Tibial artery (tissue), 4 donors: ENCODE measurements at regions of chr10 and their contacts with region 1.

Region 1: DNA sequence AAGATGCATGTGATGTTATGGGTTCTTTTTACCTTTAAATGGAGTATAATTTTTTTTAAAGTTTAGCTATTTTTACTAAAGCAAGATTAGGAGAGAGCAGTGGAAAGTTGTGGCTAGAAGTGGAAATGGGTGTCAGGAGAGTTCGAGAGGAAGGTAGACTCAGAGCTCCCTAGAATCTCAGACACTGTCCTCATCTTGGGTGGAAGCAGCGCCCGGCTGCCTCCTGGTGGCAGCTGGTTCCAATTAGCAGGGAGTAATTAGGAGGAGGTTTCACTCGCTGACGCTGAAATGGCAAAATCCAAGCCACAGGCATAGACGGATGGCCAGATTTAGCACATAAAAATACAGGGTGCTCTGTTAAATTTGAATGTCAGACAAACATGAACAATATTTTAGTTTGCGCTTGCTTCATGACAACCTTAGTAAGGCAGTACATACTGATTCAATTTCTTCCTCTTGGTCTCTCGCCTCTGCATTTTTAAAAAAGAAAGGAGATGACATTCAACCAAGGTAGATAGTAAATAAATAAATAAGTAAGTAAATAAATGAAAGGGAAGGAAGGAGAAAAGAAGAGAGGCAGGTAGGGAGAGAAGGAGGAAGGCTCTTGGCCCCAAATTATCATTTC is 58.5 kb downstream of the LGI1 start:
- DNase-seq: peak; percentile 69 to 76
- H3K4me3 ChIP-seq: peak overlapping the region; percentile 12 to 14
- H3K27ac ChIP-seq: peak overlapping the region in 1 of 2 donors; percentile 55
- H3K4me1 ChIP-seq: peaks cover 0 to 19% (median 7%) of the 10 kb centered on the region in 4 donors
- H3K27me3 ChIP-seq: no peaks in the 10 kb centered on the region
- CTCF ChIP-seq: peak; percentile 73 to 76

Region 2: DNA sequence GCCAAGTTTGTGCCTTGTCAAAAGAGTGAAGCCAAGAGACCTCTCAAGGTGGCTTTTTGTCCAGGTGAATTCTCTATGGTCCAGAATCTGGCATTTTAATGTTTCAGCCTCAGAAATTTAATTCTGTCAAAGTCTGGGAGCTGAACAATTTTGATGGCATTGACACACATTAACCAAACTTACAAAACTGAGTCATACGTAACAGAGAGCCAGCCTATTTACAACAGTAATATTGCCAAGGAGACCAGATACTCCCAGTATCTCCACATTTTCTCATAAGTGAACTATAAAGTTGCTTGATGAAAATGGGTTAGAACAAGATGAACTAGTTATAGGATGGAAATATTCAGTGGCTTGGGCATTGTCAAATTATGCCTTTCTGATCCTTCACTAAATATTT is 160.1 kb before region 1 on chr10:
- intact Hi-C with region 1: no loop called
- DNase-seq: no peak
- H3K4me3 ChIP-seq: no peak overlapping the region
- H3K27ac ChIP-seq: no peak overlapping the region
- H3K4me1 ChIP-seq: peaks cover 0 to 26% (median 3%) of the 10 kb centered on the region in 4 donors
- H3K27me3 ChIP-seq: no peaks in the 10 kb centered on the region
- CTCF ChIP-seq: no peak

Region 3: DNA sequence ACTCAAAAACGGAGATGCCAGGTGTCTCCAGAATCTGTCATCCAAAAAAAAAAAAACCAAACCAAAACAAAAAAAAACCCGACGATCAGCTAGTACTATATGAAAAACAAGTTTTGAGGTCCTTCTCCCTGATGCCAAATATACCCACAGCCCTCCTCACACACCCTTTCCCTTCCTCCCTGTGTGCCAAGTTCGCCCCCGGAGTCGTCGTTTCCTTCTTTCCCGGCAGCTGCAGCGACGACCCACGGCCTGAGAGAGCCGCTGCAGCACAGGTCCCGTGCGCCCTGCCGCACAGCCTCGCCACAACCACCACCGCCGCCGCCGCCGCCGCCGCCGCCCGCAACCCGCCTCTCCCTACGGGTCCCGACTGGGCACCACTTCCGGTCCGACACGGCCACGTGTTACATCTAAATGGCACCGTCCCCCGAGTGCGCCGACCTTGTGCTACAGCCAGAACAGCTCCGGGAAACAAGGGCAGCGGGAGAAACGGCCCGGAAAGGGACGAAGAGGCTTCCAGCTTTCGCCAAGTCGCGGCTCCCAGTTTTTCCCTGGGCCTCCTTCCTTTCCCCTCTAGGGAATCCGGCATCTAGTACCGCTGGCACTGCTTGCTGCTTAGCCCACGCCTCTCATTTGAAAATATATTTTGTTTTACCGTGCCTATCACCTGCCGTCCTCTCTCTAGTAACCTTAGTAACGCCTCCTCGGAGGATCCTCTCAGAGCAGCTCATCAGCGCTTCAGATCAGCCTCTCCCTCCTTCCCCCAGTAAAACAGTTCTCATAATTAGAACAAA is 113.8 kb before region 1 on chr10 and contains the start of gene FRA10AC1:
- intact Hi-C with region 1: loop called (anchors 2 kb)
- DNase-seq: peak; percentile 94
- H3K4me3 ChIP-seq: peak within 1 kb of the TSS; percentile 57 to 74
- H3K27ac ChIP-seq: peak within 1 kb of the TSS; percentile 85 to 91
- H3K4me1 ChIP-seq: peaks cover 0 to 26% (median 5%) of the 10 kb centered on the region in 4 donors
- H3K27me3 ChIP-seq: no peaks in the 10 kb centered on the region
- CTCF ChIP-seq: peak; percentile 49 to 55

Region 4: DNA sequence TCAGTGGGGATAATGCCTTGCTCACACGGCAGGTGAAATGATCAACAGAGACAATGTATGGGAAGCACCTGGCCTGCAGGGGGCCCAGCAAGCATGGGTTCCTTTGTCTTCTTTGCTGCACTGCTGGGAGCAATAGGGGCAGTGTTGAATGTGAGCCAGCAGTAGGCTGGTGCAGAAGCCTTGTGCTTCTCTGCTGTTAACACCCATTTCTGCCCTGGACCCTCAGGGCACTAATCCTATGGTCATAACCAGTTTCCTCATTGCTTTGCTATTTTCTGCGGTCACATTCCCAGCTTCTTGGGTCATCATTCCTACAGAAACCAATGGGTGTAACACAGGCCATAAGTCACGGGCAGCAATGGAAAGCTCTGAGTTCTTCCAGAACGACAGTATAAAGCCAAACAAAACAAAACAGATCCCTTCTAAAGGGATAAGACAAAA is 69.4 kb before region 1 on chr10:
- intact Hi-C with region 1: loop called (anchors 10 kb)
- DNase-seq: peak in 1 of 2 donors; percentile 31
- H3K4me3 ChIP-seq: no peak overlapping the region
- H3K27ac ChIP-seq: peak overlapping the region in 1 of 2 donors; percentile 55
- H3K4me1 ChIP-seq: peaks cover 0 to 36% (median 3%) of the 10 kb centered on the region in 4 donors
- H3K27me3 ChIP-seq: no peaks in the 10 kb centered on the region
- CTCF ChIP-seq: no peak

Region 5: DNA sequence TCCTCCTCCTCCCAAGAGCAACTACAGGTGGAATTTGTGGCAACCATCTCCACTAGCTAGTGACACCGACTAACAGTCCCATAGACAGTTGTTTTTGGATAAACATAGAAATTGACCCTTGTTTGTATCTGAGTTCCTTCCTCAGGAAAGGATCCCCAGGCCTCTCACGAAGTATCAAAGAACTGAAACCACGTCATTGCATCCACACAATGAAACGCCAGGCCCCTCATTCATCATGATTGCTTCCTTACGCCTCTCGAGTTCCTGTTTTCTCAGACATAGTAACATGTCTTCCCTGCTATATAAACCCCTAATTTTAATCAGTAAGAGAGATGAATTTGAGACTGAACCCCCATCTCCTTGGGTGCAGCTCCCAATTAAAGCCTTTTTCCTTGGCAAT is 95.6 kb after region 1 on chr10:
- intact Hi-C with region 1: no loop called
- DNase-seq: no peak
- H3K4me3 ChIP-seq: no peak overlapping the region
- H3K27ac ChIP-seq: no peak overlapping the region
- H3K4me1 ChIP-seq: no peaks in the 10 kb centered on the region
- H3K27me3 ChIP-seq: no peaks in the 10 kb centered on the region
- CTCF ChIP-seq: no peak